PC-9 (cell line): ENCODE measurements at regions of chr17 and their contacts with region 1.

Region 1: DNA sequence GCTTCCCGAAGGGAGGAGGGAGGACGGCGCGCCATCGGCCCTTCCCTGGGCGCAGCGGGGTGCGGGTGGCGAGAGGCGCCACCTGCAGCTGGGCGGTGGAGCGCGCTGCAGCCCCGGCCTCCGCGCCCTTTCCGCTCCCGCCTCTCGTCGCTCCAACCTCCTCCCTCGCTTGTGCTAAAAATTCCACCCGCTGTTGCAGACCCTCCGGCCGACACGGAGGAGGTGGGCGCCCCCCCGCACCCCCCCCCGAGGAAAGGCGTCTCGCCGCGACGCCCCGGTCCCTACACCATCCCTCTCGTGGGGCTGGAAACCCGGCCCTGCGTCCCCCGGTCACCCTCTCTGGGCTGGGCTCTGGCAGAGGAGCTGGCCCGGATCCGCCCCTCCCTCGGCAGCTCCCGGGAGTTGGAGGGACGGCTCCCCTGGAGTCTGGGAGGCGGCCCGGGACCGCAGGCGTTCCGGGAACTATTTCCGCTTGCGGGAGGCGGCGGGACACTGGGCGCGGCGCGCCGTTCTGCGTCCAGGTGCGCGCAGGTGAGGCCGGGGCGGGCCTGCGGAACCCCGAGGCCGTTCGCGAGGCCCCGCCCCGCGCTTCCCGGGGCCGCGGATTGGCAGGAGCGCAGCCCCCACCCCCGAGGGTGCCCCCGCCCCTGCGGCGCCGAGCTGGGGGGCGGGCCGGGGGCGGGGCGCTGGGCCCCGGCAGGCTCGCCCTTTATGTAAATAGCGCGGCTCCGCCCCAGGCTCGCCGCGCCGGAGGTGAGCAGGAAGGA is at the start of gene LLGL2:
- DNase-seq: peak; percentile 77 to 95
- H3K4me3 ChIP-seq: peak within 1 kb of the TSS; percentile 100
- H3K27ac ChIP-seq: peak within 1 kb of the TSS; percentile 55
- H3K4me1 ChIP-seq: peaks cover 21% of the 10 kb centered on the region
- H3K27me3 ChIP-seq: no peaks in the 10 kb centered on the region
- CTCF ChIP-seq: peak; percentile 60
- total RNA-seq, gene LLGL2: 138 and 156 TPM in 2 replicates

Region 2: DNA sequence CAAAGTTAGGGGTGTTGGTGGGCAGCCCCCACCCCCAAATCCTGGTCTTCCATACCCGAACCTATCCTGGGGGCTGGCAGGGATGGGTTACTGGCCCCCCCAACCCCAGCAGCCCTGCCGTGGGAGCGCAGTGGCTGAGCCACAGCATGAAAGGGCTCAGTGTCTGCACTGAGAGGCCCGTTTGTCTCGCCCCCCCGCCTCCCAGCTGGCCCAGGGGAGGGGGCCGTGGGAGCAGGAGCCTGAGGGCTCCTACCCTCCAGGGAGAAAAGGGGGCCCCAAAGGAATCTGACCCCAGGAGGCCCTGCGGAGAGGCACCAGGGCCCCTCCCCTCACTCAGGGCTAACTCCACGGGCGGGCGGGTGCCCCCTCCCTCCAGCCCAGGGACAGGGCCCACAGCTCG is 17.4 kb before region 1 on chr17:
- CTCF ChIA-PET with region 1: no interaction called
- POLR2A ChIA-PET with region 1: no interaction called
- intact Hi-C with region 1: no loop called
- DNase-seq: no peak
- H3K4me3 ChIP-seq: no peak overlapping the region
- H3K27ac ChIP-seq: no peak overlapping the region
- H3K4me1 ChIP-seq: peaks cover 13% of the 10 kb centered on the region
- H3K27me3 ChIP-seq: no peaks in the 10 kb centered on the region
- CTCF ChIP-seq: no peak

Region 3: GRCh38 chr17:75539967-75540711 is 15.0 kb after region 1 on chr17:
- CTCF ChIA-PET with region 1: no interaction called
- POLR2A ChIA-PET with region 1: no interaction called
- intact Hi-C with region 1: no loop called
- DNase-seq: no peak
- H3K4me3 ChIP-seq: no peak overlapping the region
- H3K27ac ChIP-seq: no peak overlapping the region
- H3K4me1 ChIP-seq: no peaks in the 10 kb centered on the region
- H3K27me3 ChIP-seq: no peaks in the 10 kb centered on the region
- CTCF ChIP-seq: no peak

Region 4: GRCh38 chr17:75557075-75557882 is 32.1 kb after region 1 on chr17:
- CTCF ChIA-PET with region 1: interaction called, 7 read pairs
- POLR2A ChIA-PET with region 1: no interaction called
- intact Hi-C with region 1: loop called (anchors 2 kb)
- DNase-seq: peak; percentile 80 to 89
- H3K4me3 ChIP-seq: no peak overlapping the region
- H3K27ac ChIP-seq: peak overlapping the region; percentile 39
- H3K4me1 ChIP-seq: peaks cover 32% of the 10 kb centered on the region
- H3K27me3 ChIP-seq: no peaks in the 10 kb centered on the region
- CTCF ChIP-seq: no peak

Region 5: DNA sequence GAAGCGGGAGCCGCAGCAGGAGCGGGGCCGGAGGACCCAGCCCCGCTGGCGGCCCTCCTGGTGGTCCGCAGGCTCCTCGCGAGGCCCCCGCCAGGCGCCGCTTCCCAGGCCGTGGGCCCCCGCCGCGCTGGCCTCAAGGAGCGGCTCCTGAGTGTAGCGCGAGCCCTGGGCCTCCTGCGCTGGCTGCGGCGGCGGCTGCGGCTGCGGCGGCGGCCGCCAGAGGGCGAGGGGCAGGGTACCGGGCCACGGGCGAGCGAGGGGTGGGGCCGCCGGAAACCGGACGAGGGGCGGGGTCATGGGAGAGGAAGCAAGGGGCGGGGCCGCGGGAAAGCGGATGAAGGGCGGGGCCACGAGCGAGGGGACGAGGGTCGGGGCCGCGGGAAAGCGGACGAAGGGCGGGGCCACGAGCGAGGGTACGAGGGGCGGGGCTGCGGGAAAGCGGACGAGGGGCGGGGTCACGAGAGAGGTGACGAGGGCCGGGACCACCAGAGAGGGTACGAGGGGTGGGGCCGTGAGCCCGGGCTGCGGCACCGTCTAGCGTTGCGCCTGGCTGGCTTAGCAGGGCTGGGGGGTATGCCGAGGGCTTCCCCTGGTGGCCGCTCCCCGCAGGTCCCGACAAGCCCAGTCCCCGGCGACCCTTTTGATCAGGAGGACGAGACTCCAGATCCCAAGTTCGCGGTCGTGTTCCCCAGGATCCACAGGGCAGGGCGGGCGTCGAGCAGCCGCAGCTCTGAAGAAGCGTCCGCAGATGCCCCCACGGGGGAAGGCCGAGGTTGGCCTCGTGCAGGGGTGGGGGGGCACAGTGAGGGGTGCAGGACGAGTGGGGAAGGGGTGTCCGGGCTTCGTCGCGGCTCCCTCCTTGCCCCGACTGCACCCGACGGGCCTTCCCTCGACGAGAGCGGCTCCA is 64.1 kb after region 1 on chr17:
- CTCF ChIA-PET with region 1: no interaction called
- POLR2A ChIA-PET with region 1: no interaction called
- intact Hi-C with region 1: loop called (anchors 2 kb)
- DNase-seq: peak; percentile 51 to 93
- H3K4me3 ChIP-seq: peak overlapping the region; percentile 61
- H3K27ac ChIP-seq: no peak overlapping the region
- H3K4me1 ChIP-seq: no peaks in the 10 kb centered on the region
- H3K27me3 ChIP-seq: no peaks in the 10 kb centered on the region
- CTCF ChIP-seq: no peak; the same call in 1 of the 2 replicates